ENCODE measurements at regions of chr6 and their contacts with region 1.

Region 1: DNA sequence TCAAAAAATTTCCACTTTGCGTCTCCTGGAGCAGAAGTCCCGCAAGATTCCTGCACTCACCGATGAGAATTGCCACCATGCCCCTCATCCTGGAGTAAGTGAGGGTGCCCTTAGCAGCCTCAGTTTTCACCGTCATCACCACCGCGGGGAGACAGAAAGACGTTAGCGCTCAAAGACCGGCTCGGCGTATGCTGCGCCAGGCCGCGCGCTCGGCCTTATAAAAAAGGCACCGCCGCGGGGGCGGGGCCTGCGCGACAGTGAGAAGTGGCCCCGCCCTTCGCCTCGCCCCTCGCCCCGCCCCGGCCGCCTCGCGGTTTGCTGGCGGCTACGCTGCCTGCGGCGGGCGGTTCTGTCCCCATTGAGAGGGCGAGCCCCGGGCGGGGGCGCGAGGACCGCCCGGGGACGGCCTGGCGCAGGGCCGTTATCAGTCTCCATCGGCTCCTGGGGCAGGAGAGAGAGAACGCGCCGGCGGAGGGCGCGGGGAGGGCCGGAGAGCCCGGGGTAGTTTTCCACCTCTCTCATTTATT is 122.3 kb upstream of the SLC2A12 start:
- DNase-seq: peak; percentile 95
- H3K4me3 ChIP-seq: peak overlapping the region; percentile 86 to 95 (median 95)
- H3K27ac ChIP-seq: peak overlapping the region; percentile 98 to 100 (median 99)
- H3K4me1 ChIP-seq: peaks cover 47 to 57% of the 10 kb centered on the region in 2 donors
- H3K27me3 ChIP-seq: no peaks in the 10 kb centered on the region
- CTCF ChIP-seq: peak in 2 of 6 experiments; percentile 3 to 22
- POLR2A ChIP-seq: peak; percentile 88 to 100

Region 2: DNA sequence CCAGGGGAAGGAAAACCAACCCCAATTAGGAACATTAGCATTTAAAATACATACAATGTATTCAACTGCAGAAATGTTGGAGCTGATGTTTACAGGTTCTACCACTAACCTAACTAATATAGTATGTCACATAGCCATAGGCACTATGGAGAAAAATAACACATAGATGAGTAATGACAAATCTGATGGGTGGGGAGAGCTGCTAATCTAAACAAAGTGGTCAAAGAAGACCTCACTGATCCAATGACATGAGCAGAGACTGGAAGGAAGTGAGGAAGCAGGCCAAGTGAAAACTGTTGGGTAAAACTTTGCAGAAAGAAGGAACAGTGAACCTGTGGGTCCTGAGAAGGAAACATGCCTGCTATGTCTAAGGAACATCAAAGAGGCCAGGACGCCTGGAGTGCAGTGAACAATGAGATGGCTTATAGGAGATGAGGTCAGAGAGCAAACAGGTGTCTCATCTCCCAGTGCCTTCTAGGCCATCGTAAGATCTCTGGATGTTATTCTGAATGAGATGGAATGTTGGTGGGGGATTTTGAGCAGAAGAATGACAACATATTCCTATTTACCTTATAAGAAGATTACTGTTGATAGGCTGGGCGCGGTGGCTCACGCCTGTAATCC is 639.5 kb after region 1 on chr6:
- intact Hi-C with region 1: loop called (anchors 5 kb)
- DNase-seq: no peak
- H3K4me3 ChIP-seq: no peak overlapping the region
- H3K27ac ChIP-seq: no peak overlapping the region
- H3K4me1 ChIP-seq: peaks cover 24% of the 10 kb centered on the region in 2 donors
- H3K27me3 ChIP-seq: no peaks in the 10 kb centered on the region
- CTCF ChIP-seq: no peak
- POLR2A ChIP-seq: no peak

Region 3: DNA sequence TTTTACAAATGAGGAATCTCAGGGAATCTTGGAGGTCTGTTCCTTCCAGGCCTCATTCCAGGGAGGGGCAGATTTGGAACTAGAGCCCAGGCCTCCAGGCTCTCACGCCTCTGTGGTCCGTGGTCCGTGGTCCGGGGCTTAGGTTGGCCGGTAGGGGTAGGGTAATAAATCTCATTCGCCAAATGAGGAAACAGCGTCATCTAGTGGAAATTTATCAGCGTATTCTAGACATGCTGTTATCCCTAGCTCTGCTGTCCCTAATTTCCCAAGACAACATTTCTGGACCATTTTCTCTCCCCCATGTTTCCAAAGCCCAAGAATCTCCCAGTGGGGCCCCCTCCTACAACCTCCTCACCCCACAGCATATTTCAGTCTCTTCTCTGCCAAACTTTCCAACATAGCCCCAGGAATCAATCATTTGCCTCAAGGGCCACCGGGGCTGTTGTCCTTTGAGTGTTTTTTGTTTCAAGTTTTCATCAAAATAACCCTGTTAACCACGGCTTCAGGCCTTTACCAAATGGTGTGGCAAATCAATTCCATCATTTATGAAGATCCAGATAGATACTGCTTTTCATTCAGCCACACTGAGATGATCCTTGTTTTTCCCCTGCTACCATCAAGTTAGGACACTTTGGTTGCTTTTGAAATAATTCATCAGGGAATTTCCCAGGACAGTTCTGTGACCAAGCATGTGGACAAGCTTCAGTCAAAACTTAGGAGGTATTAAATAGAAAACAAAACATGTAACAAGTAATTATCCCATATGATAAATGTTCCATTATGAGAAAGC is 648.4 kb after region 1 on chr6:
- intact Hi-C with region 1: loop called (anchors 5 kb)
- DNase-seq: peak; percentile 27 to 45
- H3K4me3 ChIP-seq: no peak overlapping the region
- H3K27ac ChIP-seq: no peak overlapping the region
- H3K4me1 ChIP-seq: peaks cover 4 to 18% of the 10 kb centered on the region in 2 donors
- H3K27me3 ChIP-seq: no peaks in the 10 kb centered on the region
- CTCF ChIP-seq: peak; percentile 65 to 99 (median 90)
- POLR2A ChIP-seq: no peak

Measured in thyroid gland (tissue), 4 donors.